ENCODE measurements at regions of chr6 and their contacts with region 1.

Region 1: DNA sequence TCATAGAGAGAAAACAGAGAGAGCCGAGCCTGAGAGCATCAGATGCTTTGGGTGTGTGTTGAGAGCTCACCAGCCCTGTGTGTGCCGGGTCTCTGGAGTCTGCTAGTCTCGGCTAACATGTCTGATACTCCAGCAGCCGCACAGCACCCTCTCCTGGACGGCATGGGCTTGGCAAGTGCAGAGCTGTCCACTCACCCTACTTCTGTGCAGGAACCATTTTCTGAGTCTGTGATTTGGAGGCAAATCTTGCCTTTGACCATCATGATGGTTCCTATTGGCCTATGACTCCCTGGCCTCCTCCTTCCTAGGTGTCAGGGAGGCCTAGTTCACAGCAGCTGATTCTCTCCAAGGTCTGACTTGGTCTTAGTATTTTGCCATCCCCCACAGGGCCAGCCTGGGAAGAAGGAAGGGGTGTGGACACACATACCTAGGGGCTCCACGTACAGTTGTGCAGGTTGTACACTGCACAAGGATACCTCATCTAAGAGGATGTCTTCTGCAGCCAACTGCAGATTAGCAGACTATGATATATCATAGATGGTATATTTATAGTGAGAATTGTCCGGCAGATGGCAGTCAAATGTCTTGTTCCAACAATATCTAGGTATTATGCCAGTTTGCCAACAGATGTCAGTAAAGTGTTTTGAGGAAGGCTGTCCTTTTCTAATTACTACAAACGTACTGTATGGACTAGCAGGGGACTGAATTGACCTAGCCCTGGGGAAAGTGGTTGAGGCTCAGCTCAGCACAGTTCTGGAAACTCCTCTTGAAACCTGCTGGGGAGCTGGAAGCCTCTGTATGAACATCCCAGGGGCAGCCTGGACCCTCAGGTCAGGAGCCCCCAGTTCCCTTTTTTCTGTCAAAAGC is 13.0 kb downstream of the FGD2 start:
- DNase-seq: peak; percentile 42
- H3K4me3 ChIP-seq: no peak overlapping the region
- CTCF ChIP-seq: peak; percentile 96

Region 2: GRCh38 chr6:36809941-36810803 is 208.3 kb before region 1 on chr6:
- CTCF ChIA-PET with region 1: interaction called, 14 read pairs
- POLR2A ChIA-PET with region 1: no interaction called
- DNase-seq: no peak
- H3K4me3 ChIP-seq: no peak overlapping the region
- CTCF ChIP-seq: no peak

Region 3: GRCh38 chr6:36897609-36898008 is 120.8 kb before region 1 on chr6:
- CTCF ChIA-PET with region 1: interaction called, 17 read pairs
- POLR2A ChIA-PET with region 1: no interaction called
- DNase-seq: no peak
- H3K4me3 ChIP-seq: no peak overlapping the region
- CTCF ChIP-seq: no peak

Region 4: DNA sequence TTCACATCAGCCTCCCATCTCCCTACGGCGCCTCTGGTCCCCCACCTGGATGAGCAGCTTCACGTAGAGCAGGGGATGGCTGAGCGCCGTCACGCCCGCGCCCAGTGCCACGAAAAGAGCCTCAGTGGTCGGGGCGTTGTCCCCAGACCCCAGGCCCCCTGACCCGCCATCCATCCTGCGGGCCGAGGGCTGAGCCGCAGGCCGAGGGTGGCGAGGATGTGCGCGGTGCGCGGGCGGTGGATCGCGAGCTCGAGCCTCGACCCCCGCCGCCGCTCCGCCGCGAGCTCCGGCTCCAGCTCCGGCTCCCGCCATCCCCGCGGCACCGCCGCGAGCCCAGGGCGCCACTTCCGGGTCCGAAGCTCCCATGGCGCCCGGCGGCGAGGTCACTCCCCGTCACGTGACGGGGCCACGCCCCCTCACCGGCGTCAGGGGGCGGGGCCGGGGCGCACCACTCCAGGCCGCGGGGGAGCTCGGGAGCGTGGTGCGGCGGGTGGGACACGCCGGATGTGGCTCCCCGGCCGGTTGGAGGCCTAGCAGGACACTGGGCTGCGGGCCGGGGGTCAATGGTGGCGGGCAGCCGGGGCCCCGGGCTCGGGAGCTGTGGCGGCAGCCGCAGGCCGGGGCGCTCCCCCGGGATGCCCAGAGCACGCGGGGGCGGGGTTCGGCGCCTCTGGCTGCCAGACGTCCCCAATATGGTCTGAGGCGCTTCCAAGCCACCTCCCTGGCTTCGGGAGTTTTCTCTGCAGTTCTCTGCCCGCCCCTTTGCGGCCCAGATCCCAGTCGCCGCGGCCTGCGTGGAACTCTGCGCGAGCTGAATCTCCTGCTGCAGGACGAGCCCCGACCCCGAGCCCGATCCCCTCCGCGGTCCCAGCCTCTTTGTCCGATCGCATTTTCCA is 32.4 kb before region 1 on chr6 and contains the start of gene MTCH1:
- CTCF ChIA-PET with region 1: interaction called, 15 read pairs
- POLR2A ChIA-PET with region 1: interaction called, 4 read pairs
- DNase-seq: peak; percentile 19
- H3K4me3 ChIP-seq: peak within 1 kb of the TSS; percentile 99
- CTCF ChIP-seq: no peak

Region 5: DNA sequence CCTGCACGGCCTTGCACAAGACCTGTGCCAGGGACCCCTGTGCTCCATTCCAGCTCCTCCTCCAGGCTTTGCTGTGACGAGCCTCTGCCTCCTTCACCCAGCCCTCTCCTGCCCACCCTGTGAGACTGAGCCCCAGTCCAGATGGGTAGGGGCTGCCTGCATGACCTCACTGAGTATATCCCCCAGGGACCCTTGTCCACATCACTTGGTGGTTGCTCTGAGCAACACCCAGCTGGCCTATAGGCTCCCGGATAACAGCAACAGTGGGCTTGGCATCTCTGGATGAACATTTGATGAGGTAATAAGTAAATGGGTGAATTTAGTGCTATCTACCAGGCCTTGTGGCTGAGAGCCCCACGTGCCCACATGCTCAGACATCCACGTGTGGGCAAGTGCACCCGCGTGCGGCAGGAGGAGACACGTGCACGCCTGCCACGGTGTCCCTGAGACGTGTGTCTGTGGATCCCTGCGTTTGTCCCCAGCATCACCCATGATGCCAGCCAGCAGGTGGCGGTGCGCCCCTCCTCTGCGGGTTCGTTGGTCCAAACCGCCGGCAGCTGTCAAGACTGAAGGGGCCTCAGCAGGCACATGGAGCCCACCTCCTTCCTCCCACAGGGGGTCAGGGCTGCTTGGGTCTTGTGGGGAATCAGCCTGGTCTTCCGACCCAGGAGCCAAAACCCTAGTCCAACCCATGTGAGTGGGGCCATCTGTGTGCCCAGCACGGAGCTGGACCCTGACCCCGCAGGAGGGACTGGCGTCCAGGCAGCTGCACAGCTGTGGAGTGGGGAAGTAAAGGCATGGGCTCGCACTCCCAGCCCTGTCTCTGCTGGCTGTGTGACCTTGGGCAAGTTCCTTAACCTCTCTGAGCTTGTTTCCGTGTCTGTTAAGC is 33.0 kb after region 1 on chr6:
- CTCF ChIA-PET with region 1: interaction called, 118 read pairs
- POLR2A ChIA-PET with region 1: no interaction called
- DNase-seq: no peak
- H3K4me3 ChIP-seq: peak overlapping the region; percentile 1; the same call in 1 of the 2 replicates
- CTCF ChIP-seq: peak; percentile 96

Region 6: DNA sequence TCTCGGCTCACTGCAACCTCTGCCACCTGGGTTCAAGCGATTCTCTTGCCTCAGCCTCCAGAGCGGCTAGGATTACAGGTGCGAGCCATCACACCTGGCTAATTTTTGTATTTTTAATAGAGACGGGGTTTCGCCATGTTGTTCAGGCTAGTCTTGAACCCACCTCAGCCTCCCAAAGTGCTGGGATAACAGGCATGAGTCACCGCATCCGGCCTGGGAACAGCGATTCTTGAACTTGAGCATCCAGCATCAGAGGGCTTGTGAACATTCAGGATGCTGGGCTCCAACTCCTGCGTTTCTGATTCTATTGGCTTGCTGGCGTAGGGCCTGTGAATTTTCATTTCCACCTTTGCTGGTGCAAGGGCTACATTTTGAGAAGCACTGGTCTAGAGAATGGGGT is 127.0 kb after region 1 on chr6:
- CTCF ChIA-PET with region 1: no interaction called
- POLR2A ChIA-PET with region 1: no interaction called
- DNase-seq: no peak
- H3K4me3 ChIP-seq: no peak overlapping the region
- CTCF ChIP-seq: no peak

Region 7: GRCh38 chr6:37169496-37170272 is 151.3 kb after region 1 on chr6 and contains the start of gene PIM1:
- CTCF ChIA-PET with region 1: interaction called, 480 read pairs
- POLR2A ChIA-PET with region 1: interaction called, 3 read pairs
- DNase-seq: peak; percentile 76
- H3K4me3 ChIP-seq: peak within 1 kb of the TSS; percentile 96
- CTCF ChIP-seq: no peak

Region 8: GRCh38 chr6:37239950-37240713 is 221.7 kb after region 1 on chr6:
- CTCF ChIA-PET with region 1: interaction called, 15 read pairs
- POLR2A ChIA-PET with region 1: no interaction called
- DNase-seq: peak; percentile 88
- H3K4me3 ChIP-seq: no peak overlapping the region
- CTCF ChIP-seq: no peak